ENCODE measurements at regions of chr16 and their contacts with region 1.

Region 1: DNA sequence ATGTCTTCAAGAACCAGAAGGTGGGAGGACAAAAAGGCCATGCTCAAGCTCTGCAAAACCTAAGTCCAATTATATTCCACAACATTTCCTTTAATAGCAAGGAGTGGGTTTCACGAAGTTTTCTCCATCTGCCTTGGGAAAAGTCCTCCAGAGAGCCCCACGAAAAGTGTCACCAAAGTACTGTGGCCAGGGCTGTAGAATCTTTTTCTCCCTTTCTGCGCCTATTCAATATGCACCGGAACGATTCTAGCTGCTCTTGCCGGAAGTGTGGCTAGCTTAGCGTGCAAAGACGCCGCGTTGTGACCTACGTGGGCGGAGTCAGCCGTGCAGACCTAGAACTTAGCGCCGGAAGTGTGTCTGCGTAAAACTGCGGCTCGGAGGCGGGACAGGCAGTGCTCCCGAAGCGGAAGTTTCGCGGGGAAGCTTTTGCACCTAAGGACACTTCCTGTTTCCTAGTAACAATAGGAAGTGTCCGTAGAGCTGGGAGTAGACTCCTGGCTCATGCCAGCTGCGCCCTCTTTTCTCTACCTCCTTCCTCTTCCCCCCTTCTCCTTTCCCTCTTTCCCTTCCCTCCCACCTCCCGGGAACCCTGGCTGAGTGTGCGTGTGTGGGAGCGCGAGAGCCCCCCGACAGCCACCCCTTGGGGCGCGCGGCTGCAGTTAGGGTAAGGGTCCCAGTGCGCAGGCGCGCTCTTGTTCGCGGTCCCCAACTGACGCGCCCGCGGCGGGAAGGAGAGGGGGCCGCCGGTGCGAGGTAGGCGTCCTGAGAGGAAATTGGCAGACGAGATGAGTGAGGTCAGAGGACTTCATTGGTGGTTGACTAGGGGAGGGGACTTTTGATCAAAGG is at the starts of genes ZNF646 and ZNF668:
- DNase-seq: peak; percentile 89 to 99 (median 98)
- ATAC-seq: peak; percentile 85 to 88 (median 86)
- H3K4me3 ChIP-seq: peak within 1 kb of the TSS; percentile 69 to 95
- H3K4me3 Mint-ChIP-seq: peak within 1 kb of the TSS; percentile 92 to 96 (median 94)
- H3K27ac ChIP-seq: peak within 1 kb of the TSS; percentile 89
- H3K27ac Mint-ChIP-seq: peak within 1 kb of the TSS; percentile 95 to 97
- H3K4me1 ChIP-seq: peaks cover 14 to 34% of the 10 kb centered on the region in 2 experiments
- H3K4me1 Mint-ChIP-seq: peaks cover 39 to 47% (median 46%) of the 10 kb centered on the region in 3 donors
- H3K27me3 ChIP-seq: no peaks in the 10 kb centered on the region
- H3K27me3 Mint-ChIP-seq: no peaks in the 10 kb centered on the region
- total RNA-seq, gene ZNF646: 21.1 to 47.7 (median 44.1) TPM
- total RNA-seq, gene ZNF668: 12.3 to 14.4 (median 14.3) TPM

Region 2: GRCh38 chr16:31265329-31266245 is 191.4 kb after region 1 on chr16:
- CTCF ChIA-PET with region 1: no interaction called
- POLR2A ChIA-PET with region 1: no interaction called
- DNase-seq: peak in 32 of 35 experiments; percentile 8 to 73 (median 41)
- ATAC-seq: peak; percentile 54 to 95 (median 64)
- H3K4me3 ChIP-seq: no peak overlapping the region
- H3K4me3 Mint-ChIP-seq: no peak overlapping the region
- H3K27ac ChIP-seq: peak overlapping the region; percentile 74
- H3K27ac Mint-ChIP-seq: peak overlapping the region; percentile 22 to 43
- H3K4me1 ChIP-seq: peaks cover 5 to 36% of the 10 kb centered on the region in 2 experiments
- H3K4me1 Mint-ChIP-seq: peaks cover 14 to 44% (median 16%) of the 10 kb centered on the region in 3 donors
- H3K27me3 ChIP-seq: peaks cover 0 to 14% of the 10 kb centered on the region in 2 experiments
- H3K27me3 Mint-ChIP-seq: peaks cover 5 to 19% of the 10 kb centered on the region in 2 donors

Region 3: DNA sequence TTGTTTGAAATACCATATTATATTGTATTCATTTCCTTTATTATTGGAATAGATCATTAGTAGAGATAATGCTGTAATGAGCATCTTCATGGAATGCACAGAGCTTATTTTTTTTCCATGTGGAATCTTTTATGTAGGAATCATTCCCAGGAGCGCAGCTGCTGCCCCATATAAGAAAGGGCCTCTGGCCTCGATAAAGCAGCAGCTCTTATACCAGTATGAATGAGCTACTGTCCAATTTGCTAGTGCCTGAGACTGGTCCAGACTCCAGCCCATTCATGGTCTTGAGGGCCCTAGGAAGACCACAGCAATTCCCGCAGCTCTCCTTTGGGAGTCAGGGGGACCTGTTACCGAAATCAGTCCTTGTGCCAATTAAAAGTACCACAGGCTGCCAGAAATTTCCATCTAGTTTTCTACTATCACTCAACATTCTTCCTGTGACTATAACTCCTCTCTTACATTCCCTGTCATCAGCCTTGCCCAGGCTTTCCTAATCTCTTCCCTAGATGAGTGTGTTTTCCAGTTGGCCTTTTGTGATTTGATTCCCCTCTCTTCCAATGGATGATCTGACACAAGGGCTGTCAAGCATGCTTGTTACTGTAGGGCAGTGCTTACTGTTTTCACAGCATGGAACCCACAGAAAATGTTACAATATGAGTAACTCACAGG is 366.5 kb after region 1 on chr16:
- CTCF ChIA-PET with region 1: no interaction called
- POLR2A ChIA-PET with region 1: interaction called in 1 of 2 experiments, 11 read pairs
- DNase-seq: no peak
- ATAC-seq: no peak
- H3K4me3 ChIP-seq: no peak overlapping the region
- H3K4me3 Mint-ChIP-seq: peak overlapping the region in 1 of 3 donors; percentile 0
- H3K27ac ChIP-seq: no peak overlapping the region
- H3K27ac Mint-ChIP-seq: no peak overlapping the region
- H3K4me1 ChIP-seq: peaks cover 0 to 10% of the 10 kb centered on the region in 2 experiments
- H3K4me1 Mint-ChIP-seq: peaks cover 6 to 10% (median 7%) of the 10 kb centered on the region in 3 donors
- H3K27me3 ChIP-seq: peaks cover 0 to 5% of the 10 kb centered on the region in 2 experiments
- H3K27me3 Mint-ChIP-seq: no peaks in the 10 kb centered on the region